ENCODE measurements at regions of chr5 and their contacts with region 1.

Region 1: DNA sequence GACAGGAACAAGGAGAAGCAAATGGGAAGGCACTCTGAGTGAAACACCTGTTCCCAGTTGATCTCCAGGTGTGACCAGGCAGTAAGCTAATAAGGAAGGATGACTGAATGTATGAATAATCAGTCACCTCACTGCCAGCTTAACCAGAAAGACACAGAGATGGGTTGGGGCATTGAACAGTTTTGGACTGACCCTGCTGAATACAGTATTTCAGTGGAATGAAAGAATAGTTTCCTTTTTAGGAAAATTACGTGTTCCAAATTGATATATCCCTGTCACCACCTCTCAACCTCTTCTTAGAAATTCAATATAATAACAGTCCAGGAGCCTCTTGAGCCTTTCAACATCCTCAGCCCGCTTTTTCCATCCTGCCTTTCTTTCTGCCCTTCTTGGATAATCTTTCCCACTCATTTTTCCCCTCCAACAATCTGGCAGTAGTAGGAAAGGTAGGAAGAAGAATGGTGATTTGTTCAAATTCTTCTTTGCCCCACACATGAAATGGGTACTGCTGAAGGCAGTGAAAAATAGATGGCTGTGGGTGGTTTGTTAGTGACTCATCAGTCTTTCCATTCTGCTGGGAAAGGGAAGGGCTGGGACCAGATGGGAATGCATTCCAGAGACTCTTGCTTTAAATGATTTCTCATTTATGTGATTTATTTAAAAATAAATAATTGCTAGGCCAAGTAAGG is 117.9 kb downstream of the ZSWIM6 start:
- DNase-seq: peak in 1 of 2 donors; percentile 42
- ATAC-seq: peak; percentile 89
- H3K4me3 ChIP-seq: no peak overlapping the region
- H3K27ac ChIP-seq: peak overlapping the region; percentile 87 to 98
- H3K4me1 ChIP-seq: peaks cover 5 to 7% of the 10 kb centered on the region in 2 donors
- H3K27me3 ChIP-seq: no peaks in the 10 kb centered on the region

Region 2: DNA sequence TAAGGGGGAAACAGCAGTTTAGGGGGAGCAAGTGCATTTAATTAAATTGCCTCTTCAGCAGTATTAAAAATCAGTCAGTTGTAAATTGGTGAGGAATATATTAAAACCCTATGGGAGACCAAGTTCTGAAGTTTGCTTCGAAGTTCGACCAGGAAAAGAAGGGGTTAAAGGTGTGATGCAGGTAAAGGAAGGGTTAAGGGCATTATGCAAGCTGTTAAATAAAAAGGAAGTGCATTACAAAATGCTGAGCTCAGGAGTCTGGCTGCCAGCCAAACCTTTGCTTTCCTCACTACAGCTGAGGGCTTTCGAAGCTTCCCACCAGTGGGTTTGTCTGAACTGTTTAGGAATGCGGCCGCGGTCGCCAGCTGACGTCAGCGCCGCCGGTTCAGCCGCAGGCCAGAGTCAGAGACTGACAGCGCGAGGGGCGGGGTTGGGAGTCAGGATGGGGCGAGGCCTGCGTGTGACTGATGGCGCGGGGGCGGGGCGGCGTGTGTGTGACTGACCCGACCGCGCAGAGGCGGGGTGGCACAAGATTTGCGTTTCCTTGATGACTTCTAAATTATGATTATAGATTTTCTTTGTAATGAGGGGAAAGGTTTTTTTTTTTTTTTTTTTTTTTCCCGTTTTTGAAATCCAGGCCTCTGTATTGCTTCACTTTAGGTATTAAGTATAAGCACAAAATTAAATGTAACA is 41.3 kb before region 1 on chr5:
- intact Hi-C with region 1: loop called (anchors 5 kb)
- DNase-seq: peak; percentile 100
- ATAC-seq: peak; percentile 100
- H3K4me3 ChIP-seq: no peak overlapping the region
- H3K27ac ChIP-seq: no peak overlapping the region
- H3K4me1 ChIP-seq: no peaks in the 10 kb centered on the region
- H3K27me3 ChIP-seq: no peaks in the 10 kb centered on the region

Measured in aorta (tissue), 5 donors.